ENCODE measurements at regions of chr1 and their contacts with region 1.

Region 1: GRCh38 chr1:113811888-113812660 is at the start of gene RSBN1:
- DNase-seq: peak; percentile 98 to 100 (median 99)
- H3K4me3 ChIP-seq: peak within 1 kb of the TSS; percentile 96 to 97
- H3K4me3 Mint-ChIP-seq: peak within 1 kb of the TSS; percentile 96 to 100 (median 99)
- H3K27ac ChIP-seq: peak within 1 kb of the TSS; percentile 93
- H3K27ac Mint-ChIP-seq: peak within 1 kb of the TSS; percentile 96 to 100 (median 99)
- H3K4me1 ChIP-seq: peaks cover 36% of the 10 kb centered on the region
- H3K4me1 Mint-ChIP-seq: peaks cover 22 to 45% (median 29%) of the 10 kb centered on the region in 4 donors
- H3K27me3 ChIP-seq: no peaks in the 10 kb centered on the region
- H3K27me3 Mint-ChIP-seq: no peaks in the 10 kb centered on the region
- total RNA-seq, gene RSBN1: 58.7 to 60.2 TPM

Region 2: DNA sequence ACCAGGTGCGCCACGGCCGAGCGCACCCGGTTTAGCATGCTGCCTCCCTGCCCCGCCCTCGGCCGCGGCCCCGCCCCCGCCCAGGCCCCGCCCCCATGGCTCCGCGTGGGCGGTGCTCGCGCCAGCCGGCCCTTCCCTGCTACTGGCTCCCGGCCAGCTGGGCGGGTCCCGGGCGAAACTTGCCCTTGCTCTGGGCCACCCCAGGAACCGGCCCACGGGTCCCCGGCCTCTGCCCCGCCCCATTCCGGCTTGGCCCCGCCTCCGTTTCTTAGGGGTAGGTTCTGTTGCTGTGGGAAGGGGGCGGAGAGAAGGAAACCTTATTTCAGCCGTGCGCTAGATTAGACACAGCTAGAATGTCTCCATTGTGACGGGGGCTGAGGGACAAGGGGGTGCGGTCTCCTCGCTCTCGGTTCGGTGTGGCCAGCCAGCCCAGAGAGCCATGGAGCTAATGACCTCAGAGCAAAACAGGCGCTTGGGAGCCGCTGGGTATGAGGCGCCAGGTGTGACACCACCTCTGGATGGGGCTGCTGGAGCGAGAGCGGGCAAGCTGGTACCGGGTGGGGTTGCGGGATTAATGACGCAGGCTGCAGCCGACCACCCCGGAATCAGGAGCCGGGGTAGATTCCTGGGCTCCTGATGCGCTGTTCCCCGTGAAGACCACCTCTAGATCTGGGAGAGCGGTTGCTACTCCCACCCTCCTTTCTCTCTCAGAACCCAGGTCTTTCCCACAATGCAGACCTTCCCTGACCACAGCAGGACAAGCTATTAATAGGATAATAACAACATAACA is 1096.6 kb before region 1 on chr1 and contains the start of gene PPM1J:
- CTCF ChIA-PET with region 1: no interaction called
- POLR2A ChIA-PET with region 1: interaction called, 9 read pairs
- intact Hi-C with region 1: loop called (anchors 1 kb)
- DNase-seq: peak; percentile 96 to 97 (median 97)
- H3K4me3 ChIP-seq: peak within 1 kb of the TSS; percentile 58 to 72
- H3K4me3 Mint-ChIP-seq: peak within 1 kb of the TSS; percentile 81 to 96 (median 93)
- H3K27ac ChIP-seq: peak within 1 kb of the TSS; percentile 43
- H3K27ac Mint-ChIP-seq: peak within 1 kb of the TSS; percentile 81 to 96 (median 93)
- H3K4me1 ChIP-seq: peaks cover 22% of the 10 kb centered on the region
- H3K4me1 Mint-ChIP-seq: peaks cover 12 to 29% (median 19%) of the 10 kb centered on the region in 4 donors
- H3K27me3 ChIP-seq: peaks cover 8% of the 10 kb centered on the region
- H3K27me3 Mint-ChIP-seq: peaks cover 0 to 2% of the 10 kb centered on the region in 2 donors
- total RNA-seq, gene PPM1J: 0.76 TPM in 1 of 2 experiments, not detected in the other

Region 3: DNA sequence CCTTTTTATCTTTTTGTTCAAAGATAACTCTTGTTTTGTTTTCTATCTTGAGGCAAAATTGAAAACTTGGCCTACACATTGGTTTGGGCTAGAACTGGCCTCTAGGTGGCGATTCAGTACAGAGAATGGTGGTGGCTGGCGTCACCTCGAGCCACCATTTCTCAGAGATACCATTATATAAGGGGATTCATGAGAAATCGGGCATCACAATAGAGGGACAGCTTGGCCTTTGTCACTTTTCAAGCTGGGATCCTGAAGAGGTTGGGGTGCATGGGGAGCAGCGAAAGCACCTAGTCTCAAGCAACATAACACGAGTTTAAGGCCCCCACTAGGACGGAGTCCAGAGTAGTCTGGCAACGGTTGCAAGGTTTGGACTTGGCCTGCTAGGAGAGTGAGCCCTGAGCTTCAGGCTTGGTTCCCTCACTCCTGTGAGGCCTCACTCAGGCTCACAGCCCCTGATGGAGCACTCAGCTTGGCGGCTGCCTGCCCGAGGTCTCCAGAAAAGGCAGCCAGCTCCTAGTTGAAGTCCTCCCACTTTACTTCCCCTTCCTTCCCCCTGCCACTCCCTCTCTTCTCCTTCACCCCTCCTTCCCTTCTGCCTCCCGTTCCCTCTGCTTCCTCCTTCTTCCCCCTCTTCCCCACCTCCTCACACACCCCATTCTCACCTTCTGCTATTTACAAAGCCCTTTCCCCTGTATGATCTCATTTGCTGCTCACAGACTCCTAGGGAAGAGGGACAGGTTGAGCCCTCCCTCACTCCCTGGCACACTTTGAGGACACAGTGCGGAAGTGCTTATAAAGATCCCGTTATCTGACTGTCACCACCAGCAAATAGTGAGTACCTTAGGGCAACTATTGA is 671.3 kb before region 1 on chr1:
- CTCF ChIA-PET with region 1: no interaction called
- POLR2A ChIA-PET with region 1: no interaction called
- intact Hi-C with region 1: loop called (anchors 10 kb)
- DNase-seq: peak; percentile 40 to 51 (median 45)
- H3K4me3 ChIP-seq: no peak overlapping the region
- H3K4me3 Mint-ChIP-seq: peak overlapping the region in 1 of 8 donors; percentile 39
- H3K27ac ChIP-seq: no peak overlapping the region
- H3K27ac Mint-ChIP-seq: peak overlapping the region in 3 of 7 donors; percentile 63 to 84 (median 68)
- H3K4me1 ChIP-seq: peaks cover 13% of the 10 kb centered on the region
- H3K4me1 Mint-ChIP-seq: peaks cover 13 to 24% (median 17%) of the 10 kb centered on the region in 4 donors
- H3K27me3 ChIP-seq: no peaks in the 10 kb centered on the region
- H3K27me3 Mint-ChIP-seq: no peaks in the 10 kb centered on the region

Region 4: GRCh38 chr1:113732802-113733201 is 79.3 kb before region 1 on chr1:
- CTCF ChIA-PET with region 1: no interaction called
- POLR2A ChIA-PET with region 1: no interaction called
- intact Hi-C with region 1: no loop called
- DNase-seq: no peak
- H3K4me3 ChIP-seq: no peak overlapping the region
- H3K4me3 Mint-ChIP-seq: no peak overlapping the region
- H3K27ac ChIP-seq: no peak overlapping the region
- H3K27ac Mint-ChIP-seq: no peak overlapping the region
- H3K4me1 ChIP-seq: no peaks in the 10 kb centered on the region
- H3K4me1 Mint-ChIP-seq: peaks cover 0 to 2% (median 0%) of the 10 kb centered on the region in 4 donors
- H3K27me3 ChIP-seq: no peaks in the 10 kb centered on the region
- H3K27me3 Mint-ChIP-seq: no peaks in the 10 kb centered on the region

Region 5: DNA sequence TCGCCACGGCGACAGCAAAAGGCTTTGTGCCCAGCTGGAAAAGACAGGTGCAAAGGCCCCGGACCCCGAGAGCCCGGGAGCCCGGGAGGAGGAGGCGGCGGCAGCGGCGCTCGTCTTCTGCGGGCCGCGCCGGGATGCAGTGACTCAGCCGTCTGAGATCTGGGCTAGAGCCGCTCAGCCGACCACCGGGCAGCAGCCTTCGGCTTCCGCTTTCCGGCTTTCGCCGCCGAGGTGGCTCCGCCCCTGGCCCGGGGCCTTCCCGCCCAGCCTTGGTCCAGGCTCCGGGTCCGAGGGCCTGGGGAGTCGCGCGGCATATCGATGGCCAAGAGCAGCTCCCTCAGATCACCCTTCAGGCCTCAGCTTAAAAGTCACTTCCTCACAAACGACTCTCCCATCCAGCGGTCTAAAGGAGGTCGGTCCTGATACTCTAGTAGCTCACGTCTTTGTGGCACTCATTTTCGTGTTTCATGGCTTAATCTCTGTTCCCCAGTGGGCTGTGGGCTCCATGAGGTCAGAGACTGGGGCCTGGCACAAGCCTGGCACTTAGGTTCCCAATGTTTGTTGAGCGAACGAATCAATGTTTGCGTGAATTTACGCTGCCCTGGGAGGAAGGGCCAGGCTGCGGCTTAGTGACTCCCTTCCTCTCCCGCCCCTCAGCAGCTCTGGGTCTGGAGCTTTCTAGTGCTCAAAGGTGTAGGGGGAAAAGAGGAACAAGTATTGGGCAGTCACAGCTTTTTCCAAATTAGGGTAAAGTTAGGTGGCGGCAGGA is 52.6 kb before region 1 on chr1 and contains the start of gene PHTF1:
- CTCF ChIA-PET with region 1: interaction called, 31 read pairs
- POLR2A ChIA-PET with region 1: interaction called, 77 read pairs
- intact Hi-C with region 1: loop called (anchors 1 kb)
- DNase-seq: peak in 4 of 5 donors; percentile 33 to 70 (median 46)
- H3K4me3 ChIP-seq: peak within 1 kb of the TSS; percentile 59 to 77
- H3K4me3 Mint-ChIP-seq: peak within 1 kb of the TSS; percentile 92 to 98 (median 94)
- H3K27ac ChIP-seq: peak within 1 kb of the TSS; percentile 91
- H3K27ac Mint-ChIP-seq: peak within 1 kb of the TSS; percentile 94 to 98 (median 97)
- H3K4me1 ChIP-seq: peaks cover 16% of the 10 kb centered on the region
- H3K4me1 Mint-ChIP-seq: peaks cover 16 to 36% (median 25%) of the 10 kb centered on the region in 4 donors
- H3K27me3 ChIP-seq: no peaks in the 10 kb centered on the region
- H3K27me3 Mint-ChIP-seq: no peaks in the 10 kb centered on the region
- total RNA-seq, gene PHTF1: 8.7 to 9.8 TPM

Region 6: DNA sequence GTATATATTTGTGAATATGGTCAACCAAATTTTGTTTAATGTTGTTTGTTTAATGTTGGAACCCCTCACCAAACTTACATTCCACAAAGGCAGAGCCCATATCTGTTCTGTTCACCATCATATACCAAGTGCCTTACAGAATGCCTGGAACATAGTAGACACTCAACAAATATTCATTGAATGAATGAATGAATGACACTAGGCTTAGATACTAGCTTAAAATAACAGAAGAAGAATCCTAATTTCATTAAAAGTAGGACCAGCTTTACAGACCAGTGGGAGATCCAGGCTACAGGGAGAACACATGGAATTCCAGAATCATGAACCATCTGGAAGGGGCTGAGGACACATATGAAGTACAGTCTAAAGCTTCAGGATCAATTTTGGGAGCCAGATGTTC is 11.0 kb after region 1 on chr1:
- CTCF ChIA-PET with region 1: no interaction called
- POLR2A ChIA-PET with region 1: no interaction called
- intact Hi-C with region 1: no loop called
- DNase-seq: no peak
- H3K4me3 ChIP-seq: no peak overlapping the region
- H3K4me3 Mint-ChIP-seq: no peak overlapping the region
- H3K27ac ChIP-seq: no peak overlapping the region
- H3K27ac Mint-ChIP-seq: peak overlapping the region in 2 of 7 donors; percentile 4 to 74
- H3K4me1 ChIP-seq: no peaks in the 10 kb centered on the region
- H3K4me1 Mint-ChIP-seq: no peaks in the 10 kb centered on the region
- H3K27me3 ChIP-seq: no peaks in the 10 kb centered on the region
- H3K27me3 Mint-ChIP-seq: no peaks in the 10 kb centered on the region

Region 7: GRCh38 chr1:113871597-113872113 is 59.6 kb after region 1 on chr1 and contains the start of gene PTPN22:
- CTCF ChIA-PET with region 1: no interaction called
- POLR2A ChIA-PET with region 1: interaction called, 9 read pairs
- intact Hi-C with region 1: loop called (anchors 1 kb)
- DNase-seq: peak; percentile 85 to 95 (median 90)
- H3K4me3 ChIP-seq: peak within 1 kb of the TSS; percentile 48 to 71
- H3K4me3 Mint-ChIP-seq: peak within 1 kb of the TSS; percentile 85 to 95 (median 90)
- H3K27ac ChIP-seq: peak within 1 kb of the TSS; percentile 79
- H3K27ac Mint-ChIP-seq: peak within 1 kb of the TSS; percentile 96 to 99 (median 98)
- H3K4me1 ChIP-seq: peaks cover 74% of the 10 kb centered on the region
- H3K4me1 Mint-ChIP-seq: peaks cover 56 to 83% (median 66%) of the 10 kb centered on the region in 4 donors
- H3K27me3 ChIP-seq: no peaks in the 10 kb centered on the region
- H3K27me3 Mint-ChIP-seq: no peaks in the 10 kb centered on the region
- total RNA-seq, gene PTPN22: 32.2 to 33.7 TPM

Region 8: DNA sequence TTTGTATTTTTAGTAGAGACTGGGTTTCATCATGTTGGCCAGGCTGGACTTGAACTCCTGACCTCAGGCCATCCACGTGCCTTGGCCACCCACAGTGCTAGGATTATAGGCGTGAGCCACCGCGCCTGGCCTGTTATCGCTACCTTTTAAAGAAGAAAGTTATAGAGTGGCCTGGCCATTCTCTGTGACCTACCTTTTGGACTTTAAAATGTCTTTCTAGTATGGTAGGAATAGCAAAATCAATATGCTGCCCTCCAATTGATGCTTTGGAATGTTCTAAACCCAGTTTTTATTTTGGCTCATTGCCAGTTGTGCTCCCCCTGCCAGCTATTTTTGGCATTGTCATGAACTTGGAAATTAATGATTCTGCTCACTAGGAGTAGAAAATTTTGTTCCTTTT is 136.9 kb after region 1 on chr1:
- CTCF ChIA-PET with region 1: interaction called, 10 read pairs
- POLR2A ChIA-PET with region 1: interaction called, 7 read pairs
- intact Hi-C with region 1: no loop called
- DNase-seq: peak in 2 of 5 donors; percentile 27 to 41
- H3K4me3 ChIP-seq: no peak overlapping the region
- H3K4me3 Mint-ChIP-seq: peak overlapping the region in 4 of 8 donors; percentile 51 to 86 (median 72)
- H3K27ac ChIP-seq: peak overlapping the region; percentile 5
- H3K27ac Mint-ChIP-seq: peak overlapping the region; percentile 69 to 95 (median 91)
- H3K4me1 ChIP-seq: peaks cover 88% of the 10 kb centered on the region
- H3K4me1 Mint-ChIP-seq: peaks cover 47 to 93% (median 65%) of the 10 kb centered on the region in 4 donors
- H3K27me3 ChIP-seq: no peaks in the 10 kb centered on the region
- H3K27me3 Mint-ChIP-seq: no peaks in the 10 kb centered on the region

Region 9: GRCh38 chr1:114757455-114758250 is 945.6 kb after region 1 on chr1 and contains the start of gene CSDE1:
- CTCF ChIA-PET with region 1: no interaction called
- POLR2A ChIA-PET with region 1: interaction called, 5 read pairs
- intact Hi-C with region 1: loop called (anchors 1 kb)
- DNase-seq: peak; percentile 96 to 98 (median 97)
- H3K4me3 ChIP-seq: peak within 1 kb of the TSS; percentile 97 to 99
- H3K4me3 Mint-ChIP-seq: peak within 1 kb of the TSS; percentile 97 to 100 (median 100)
- H3K27ac ChIP-seq: peak within 1 kb of the TSS; percentile 100
- H3K27ac Mint-ChIP-seq: peak within 1 kb of the TSS; percentile 100
- H3K4me1 ChIP-seq: peaks cover 52% of the 10 kb centered on the region
- H3K4me1 Mint-ChIP-seq: peaks cover 43 to 62% (median 49%) of the 10 kb centered on the region in 4 donors
- H3K27me3 ChIP-seq: no peaks in the 10 kb centered on the region
- H3K27me3 Mint-ChIP-seq: no peaks in the 10 kb centered on the region
- total RNA-seq, gene CSDE1: 530 to 559 TPM